ENCODE measurements at regions of chr11 and their contacts with region 1.

Region 1: GRCh38 chr11:85029911-85030332 is 597.2 kb downstream of the DLG2 start:
- DNase-seq: no peak
- H3K4me3 Mint-ChIP-seq: no peak overlapping the region
- H3K27ac Mint-ChIP-seq: no peak overlapping the region
- H3K4me1 Mint-ChIP-seq: no peaks in the 10 kb centered on the region
- H3K27me3 Mint-ChIP-seq: no peaks in the 10 kb centered on the region

Region 2: GRCh38 chr11:85096939-85097338 is 67.0 kb after region 1 on chr11:
- CTCF ChIA-PET with region 1: no interaction called
- intact Hi-C with region 1: loop called (anchors 10 kb)
- DNase-seq: no peak
- H3K4me3 Mint-ChIP-seq: no peak overlapping the region
- H3K27ac Mint-ChIP-seq: no peak overlapping the region
- H3K4me1 Mint-ChIP-seq: no peaks in the 10 kb centered on the region
- H3K27me3 Mint-ChIP-seq: no peaks in the 10 kb centered on the region

Region 3: GRCh38 chr11:85483861-85484260 is 453.9 kb after region 1 on chr11:
- CTCF ChIA-PET with region 1: no interaction called
- intact Hi-C with region 1: no loop called
- DNase-seq: no peak
- H3K4me3 Mint-ChIP-seq: no peak overlapping the region
- H3K27ac Mint-ChIP-seq: no peak overlapping the region
- H3K4me1 Mint-ChIP-seq: no peaks in the 10 kb centered on the region
- H3K27me3 Mint-ChIP-seq: no peaks in the 10 kb centered on the region